Activated B cell treated with CpG ODN at 0.5 μM for 24 hours (primary cell): ENCODE measurements at regions of chr9 and their contacts with region 1.

Region 1: GRCh38 chr9:122827761-122828093 is 661 bp downstream of the PDCL start:
- DNase-seq: no peak
- ATAC-seq: peak; percentile 0
- H3K4me3 Mint-ChIP-seq: peak overlapping the region; percentile 88
- H3K27ac Mint-ChIP-seq: peak overlapping the region; percentile 91
- H3K4me1 Mint-ChIP-seq: peaks cover 13% of the 10 kb centered on the region
- H3K27me3 Mint-ChIP-seq: no peaks in the 10 kb centered on the region
- CTCF ChIP-seq: no peak

Region 2: DNA sequence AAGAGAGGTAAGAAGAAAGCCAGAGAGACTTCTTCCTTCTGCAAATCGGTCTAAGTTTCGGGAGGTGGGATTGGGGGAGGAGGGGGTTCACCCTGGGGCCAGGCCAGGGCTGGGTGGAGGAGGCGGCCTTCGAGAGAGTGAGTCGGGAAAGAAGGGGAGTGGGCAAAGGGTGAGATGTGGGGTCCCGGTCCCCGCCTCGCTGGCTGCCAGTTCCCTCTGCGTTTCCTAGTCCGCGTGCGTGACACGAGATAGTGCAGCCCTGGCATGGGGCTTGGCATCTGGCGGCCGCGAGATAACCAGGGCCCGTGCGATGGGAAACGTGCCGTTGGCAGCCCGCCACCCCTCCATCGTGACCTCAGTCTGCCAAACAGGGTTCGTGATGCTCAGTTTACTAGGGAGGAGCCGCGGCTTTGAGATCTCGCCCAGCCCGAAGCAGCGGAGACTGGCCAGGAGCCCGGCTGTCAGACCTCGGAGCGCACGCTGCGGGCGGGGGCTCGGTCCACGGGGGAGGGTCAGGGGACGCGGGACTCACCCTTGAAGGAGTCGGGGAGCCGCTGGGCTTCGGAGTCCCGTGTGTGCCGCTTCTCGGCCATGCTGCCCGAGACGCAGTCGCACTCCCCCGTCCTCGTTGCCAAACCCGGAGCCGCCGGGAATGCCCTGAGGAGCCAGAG is 1458.0 kb before region 1 on chr9 and contains the start of gene STOM:
- CTCF ChIA-PET with region 1: no interaction called
- POLR2A ChIA-PET with region 1: no interaction called
- intact Hi-C with region 1: loop called (anchors 1 kb)
- DNase-seq: no peak
- ATAC-seq: peak; percentile 56
- H3K4me3 Mint-ChIP-seq: peak within 1 kb of the TSS; percentile 93
- H3K27ac Mint-ChIP-seq: peak within 1 kb of the TSS; percentile 96
- H3K4me1 Mint-ChIP-seq: peaks cover 28% of the 10 kb centered on the region
- H3K27me3 Mint-ChIP-seq: no peaks in the 10 kb centered on the region
- CTCF ChIP-seq: no peak
- total RNA-seq, gene STOM: 9.8 and 11.3 TPM in 2 replicates

Region 3: GRCh38 chr9:122940603-122941559 is 113.2 kb after region 1 on chr9 and contains the start of gene RABGAP1:
- CTCF ChIA-PET with region 1: no interaction called
- POLR2A ChIA-PET with region 1: interaction called, 5 read pairs
- intact Hi-C with region 1: loop called (anchors 1 kb)
- DNase-seq: peak; percentile 89
- ATAC-seq: peak; percentile 98
- H3K4me3 Mint-ChIP-seq: peak within 1 kb of the TSS; percentile 93
- H3K27ac Mint-ChIP-seq: peak within 1 kb of the TSS; percentile 79
- H3K4me1 Mint-ChIP-seq: peaks cover 27% of the 10 kb centered on the region
- H3K27me3 Mint-ChIP-seq: no peaks in the 10 kb centered on the region
- CTCF ChIP-seq: no peak
- total RNA-seq, gene RABGAP1: 47.4 and 58.1 TPM in 2 replicates

Region 4: DNA sequence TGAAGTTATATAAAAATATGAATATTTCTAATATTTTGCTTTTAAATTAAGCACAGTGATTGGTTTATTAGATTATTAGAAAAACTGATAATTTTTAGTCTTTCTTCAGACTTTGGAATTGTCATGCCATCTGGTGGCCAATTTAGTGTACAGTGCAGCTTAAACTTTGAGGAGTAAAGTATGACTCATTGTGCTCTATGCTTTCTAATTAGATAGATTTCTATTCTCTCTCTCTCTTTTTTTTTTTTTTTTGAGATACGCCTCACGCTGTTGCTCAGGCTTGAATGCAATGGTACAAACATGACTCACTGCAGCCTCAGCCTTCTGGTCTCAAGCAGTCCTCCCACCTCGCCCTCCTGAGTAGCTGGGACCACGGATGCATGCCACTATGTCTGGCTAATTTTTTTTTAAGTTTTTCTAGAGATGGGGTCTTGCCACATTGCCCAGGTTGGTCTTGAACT is 163.7 kb after region 1 on chr9:
- CTCF ChIA-PET with region 1: no interaction called
- POLR2A ChIA-PET with region 1: interaction called, 4 read pairs
- intact Hi-C with region 1: loop called (anchors 10 kb)
- DNase-seq: no peak
- ATAC-seq: peak; percentile 95
- H3K4me3 Mint-ChIP-seq: no peak overlapping the region
- H3K27ac Mint-ChIP-seq: no peak overlapping the region
- H3K4me1 Mint-ChIP-seq: peaks cover 4% of the 10 kb centered on the region
- H3K27me3 Mint-ChIP-seq: no peaks in the 10 kb centered on the region
- CTCF ChIP-seq: no peak

Region 5: GRCh38 chr9:124022201-124023121 is 1194.7 kb after region 1 on chr9:
- CTCF ChIA-PET with region 1: no interaction called
- POLR2A ChIA-PET with region 1: no interaction called
- intact Hi-C with region 1: no loop called
- DNase-seq: no peak
- ATAC-seq: no peak
- H3K4me3 Mint-ChIP-seq: no peak overlapping the region
- H3K27ac Mint-ChIP-seq: no peak overlapping the region
- H3K4me1 Mint-ChIP-seq: peaks cover 23% of the 10 kb centered on the region
- H3K27me3 Mint-ChIP-seq: peaks cover 65% of the 10 kb centered on the region
- CTCF ChIP-seq: no peak